GM12878 (cell line): ENCODE measurements at regions of chr18 and their contacts with region 1.

Region 1: DNA sequence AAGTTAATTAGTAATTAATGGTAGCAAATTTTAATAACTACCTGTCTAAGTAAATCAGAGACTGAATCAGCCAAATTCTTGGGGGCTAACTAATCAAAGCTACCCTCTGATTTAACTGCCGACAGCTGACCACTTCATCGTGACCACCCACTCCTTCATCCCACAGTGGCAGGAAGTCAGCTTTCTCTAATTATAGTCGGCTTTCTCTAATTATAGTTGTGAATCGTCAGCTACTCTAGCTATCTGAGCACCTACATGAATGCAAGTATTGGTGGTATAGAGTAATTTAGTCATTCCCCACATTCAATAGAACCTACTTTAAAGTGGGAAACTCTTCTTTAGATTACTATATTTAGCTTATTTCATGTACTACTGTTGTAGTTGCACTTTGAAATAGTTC is 185.5 kb downstream of the PTGR3 start:
- DNase-seq: no peak
- ATAC-seq: peak; percentile 80
- H3K4me3 ChIP-seq: no peak overlapping the region
- H3K27ac ChIP-seq: no peak overlapping the region
- H3K4me1 ChIP-seq: peaks cover 5% of the 10 kb centered on the region; the same call in 1 of the 2 replicates
- H3K27me3 ChIP-seq: no peaks in the 10 kb centered on the region
- CTCF ChIP-seq: no peak
- EP300 ChIP-seq: no peak
- POLR2A ChIP-seq: no peak
- RAD21 ChIP-seq: no peak

Region 2: GRCh38 chr18:74994502-74995419 is 28.7 kb before region 1 on chr18:
- CTCF ChIA-PET with region 1: no interaction called
- POLR2A ChIA-PET with region 1: interaction called, 4 read pairs
- RAD21 ChIA-PET with region 1: interaction called, 5 read pairs
- SMC1A ChIA-PET with region 1: interaction called, 26 read pairs
- in situ Hi-C with region 1: no loop called
- intact Hi-C with region 1: no loop called
- DNase-seq: peak; percentile 35
- ATAC-seq: peak; percentile 91
- H3K4me3 ChIP-seq: peak overlapping the region; percentile 42; the same call in 1 of the 2 replicates
- H3K27ac ChIP-seq: peak overlapping the region; percentile 88
- H3K4me1 ChIP-seq: peaks cover 20% of the 10 kb centered on the region
- H3K27me3 ChIP-seq: no peaks in the 10 kb centered on the region
- CTCF ChIP-seq: no peak
- EP300 ChIP-seq: peak; percentile 27 to 81; a peak in 2 of 4 replicates
- POLR2A ChIP-seq: no peak; the same call in 1 of the 2 replicates
- RAD21 ChIP-seq: no peak

Region 3: DNA sequence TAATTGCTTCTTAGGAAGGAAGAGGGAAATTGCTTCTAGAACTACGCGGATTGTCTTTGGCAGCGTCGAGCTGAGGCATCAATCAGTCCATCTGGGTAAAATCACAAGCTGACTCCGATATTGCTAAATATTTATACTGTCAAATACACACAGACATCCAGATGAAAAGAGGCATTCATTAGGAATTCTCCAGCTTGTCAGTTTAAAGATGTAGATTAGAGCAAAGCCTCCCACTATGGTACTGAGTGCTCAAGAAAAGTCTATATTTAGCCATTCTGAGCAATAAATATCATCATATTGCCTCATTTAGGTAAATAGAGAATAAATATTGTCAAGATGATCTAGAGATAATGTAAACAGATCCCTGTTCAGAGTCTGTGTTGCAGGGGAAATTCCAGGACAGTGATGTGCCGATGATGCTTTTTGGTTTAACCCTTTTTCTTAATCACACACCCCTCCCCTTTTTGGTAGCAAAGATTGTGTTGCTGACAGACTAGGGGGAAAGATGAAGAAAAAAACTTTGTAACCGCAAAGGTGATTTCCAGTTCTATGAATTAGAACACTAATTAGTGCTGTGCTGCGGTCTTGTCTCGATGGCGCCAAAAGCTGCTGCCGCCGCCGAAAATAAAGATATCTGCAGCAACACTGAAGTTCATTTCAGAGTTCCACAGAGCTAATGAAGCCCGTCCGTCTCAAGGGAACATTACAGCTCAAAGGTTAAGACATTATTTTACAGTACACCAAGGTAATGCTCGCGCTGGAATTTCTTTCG is 13.6 kb after region 1 on chr18:
- CTCF ChIA-PET with region 1: interaction called, 15 read pairs
- POLR2A ChIA-PET with region 1: interaction called, 3 read pairs
- RAD21 ChIA-PET with region 1: interaction called, 5 read pairs
- SMC1A ChIA-PET with region 1: interaction called, 8 read pairs
- in situ Hi-C with region 1: no loop called
- intact Hi-C with region 1: no loop called
- DNase-seq: no peak
- ATAC-seq: no peak
- H3K4me3 ChIP-seq: no peak overlapping the region
- H3K27ac ChIP-seq: no peak overlapping the region
- H3K4me1 ChIP-seq: no peaks in the 10 kb centered on the region
- H3K27me3 ChIP-seq: no peaks in the 10 kb centered on the region
- CTCF ChIP-seq: no peak
- EP300 ChIP-seq: no peak
- POLR2A ChIP-seq: no peak
- RAD21 ChIP-seq: no peak